ENCODE measurements at regions of chr3 and their contacts with region 1.

Region 1: GRCh38 chr3:157794771-157795170 is 291.6 kb upstream of the VEPH1 start:
- DNase-seq: no peak
- H3K4me3 ChIP-seq: no peak overlapping the region
- H3K27ac ChIP-seq: no peak overlapping the region
- H3K4me1 ChIP-seq: no peaks in the 10 kb centered on the region
- H3K27me3 ChIP-seq: no peaks in the 10 kb centered on the region
- CTCF ChIP-seq: no peak
- EP300 ChIP-seq: no peak
- POLR2A ChIP-seq: no peak

Region 2: DNA sequence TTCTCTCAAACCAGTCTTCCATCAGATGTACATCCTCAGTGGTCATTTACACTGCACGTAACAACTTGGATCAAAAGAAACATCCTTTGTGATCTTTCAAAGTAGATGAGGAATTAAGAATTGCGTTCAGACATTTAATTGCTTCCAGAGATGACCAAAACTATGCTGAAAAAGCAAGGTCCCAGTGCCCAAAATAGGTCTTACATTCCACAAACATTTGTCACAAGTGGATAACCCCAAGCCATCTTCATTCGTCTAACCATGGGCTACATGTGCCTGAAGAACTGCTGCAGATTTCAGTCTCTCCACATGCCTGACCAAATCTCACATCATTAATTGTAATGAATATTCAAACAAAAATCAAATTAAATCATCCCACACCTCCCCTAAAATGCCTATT is 37.8 kb after region 1 on chr3:
- in situ Hi-C with region 1: no loop called
- intact Hi-C with region 1: loop called (anchors 1 kb)
- DNase-seq: no peak
- H3K4me3 ChIP-seq: no peak overlapping the region
- H3K27ac ChIP-seq: no peak overlapping the region
- H3K4me1 ChIP-seq: no peaks in the 10 kb centered on the region
- H3K27me3 ChIP-seq: no peaks in the 10 kb centered on the region
- CTCF ChIP-seq: no peak
- EP300 ChIP-seq: no peak
- POLR2A ChIP-seq: no peak

Region 3: DNA sequence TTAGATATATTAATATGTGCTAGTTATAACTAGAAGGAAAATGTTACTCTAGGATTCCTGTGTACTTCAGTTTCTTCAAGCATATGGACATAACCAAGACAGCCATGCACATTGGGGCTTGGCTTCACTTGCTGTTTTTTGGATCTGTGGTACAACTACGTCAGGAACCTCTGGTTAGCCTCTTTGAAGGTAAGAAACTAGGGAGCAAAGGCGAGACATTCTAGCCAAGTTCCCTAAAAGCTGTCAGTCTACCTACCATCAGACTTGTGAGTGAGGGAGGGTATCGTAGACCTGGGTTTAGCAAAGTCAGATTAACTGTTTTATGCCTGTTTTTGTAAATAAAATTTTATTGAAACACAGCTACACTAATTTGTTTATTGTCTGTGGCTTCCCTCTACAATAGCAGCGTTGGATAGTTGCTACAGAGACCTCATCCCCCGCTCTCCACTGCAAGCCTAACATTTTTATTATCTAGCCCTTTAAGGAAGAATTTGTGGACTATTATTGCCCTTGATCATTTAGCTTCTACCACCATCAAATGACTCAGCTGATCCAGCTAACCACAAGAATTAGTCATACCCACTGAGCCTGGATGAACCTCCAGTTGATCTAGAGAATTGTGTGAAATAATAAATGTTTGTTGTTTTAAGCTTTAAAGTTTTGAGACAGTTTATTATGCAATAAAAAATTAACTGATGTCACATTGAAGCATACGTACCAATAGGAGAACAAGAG is 373.1 kb after region 1 on chr3:
- in situ Hi-C with region 1: no loop called
- intact Hi-C with region 1: no loop called
- DNase-seq: no peak
- H3K4me3 ChIP-seq: no peak overlapping the region
- H3K27ac ChIP-seq: no peak overlapping the region
- H3K4me1 ChIP-seq: peaks cover 0 to 11% (median 4%) of the 10 kb centered on the region in 4 donors
- H3K27me3 ChIP-seq: no peaks in the 10 kb centered on the region
- CTCF ChIP-seq: no peak
- EP300 ChIP-seq: no peak
- POLR2A ChIP-seq: no peak

Region 4: GRCh38 chr3:158205994-158206393 is 411.2 kb after region 1 on chr3:
- in situ Hi-C with region 1: no loop called
- intact Hi-C with region 1: no loop called
- DNase-seq: no peak
- H3K4me3 ChIP-seq: no peak overlapping the region
- H3K27ac ChIP-seq: no peak overlapping the region
- H3K4me1 ChIP-seq: no peaks in the 10 kb centered on the region
- H3K27me3 ChIP-seq: no peaks in the 10 kb centered on the region
- CTCF ChIP-seq: no peak
- EP300 ChIP-seq: no peak
- POLR2A ChIP-seq: no peak

Region 5: GRCh38 chr3:158233791-158234190 is 439.0 kb after region 1 on chr3:
- in situ Hi-C with region 1: no loop called
- intact Hi-C with region 1: no loop called
- DNase-seq: no peak
- H3K4me3 ChIP-seq: no peak overlapping the region
- H3K27ac ChIP-seq: no peak overlapping the region
- H3K4me1 ChIP-seq: no peaks in the 10 kb centered on the region
- H3K27me3 ChIP-seq: no peaks in the 10 kb centered on the region
- CTCF ChIP-seq: no peak
- EP300 ChIP-seq: no peak
- POLR2A ChIP-seq: no peak